ENCODE measurements at regions of chr1 and their contacts with region 1.

Region 1: GRCh38 chr1:161201828-161202725 is at the start of gene NDUFS2:
- DNase-seq: peak; percentile 97
- ATAC-seq: peak; percentile 80
- H3K4me3 Mint-ChIP-seq: peak within 1 kb of the TSS; percentile 91
- H3K27ac Mint-ChIP-seq: peak within 1 kb of the TSS; percentile 96
- H3K4me1 Mint-ChIP-seq: peaks cover 59% of the 10 kb centered on the region
- H3K27me3 Mint-ChIP-seq: no peaks in the 10 kb centered on the region
- CTCF ChIP-seq: no peak
- total RNA-seq, gene NDUFS2: 105 to 108 TPM (median 105 TPM) in 3 replicates

Region 2: DNA sequence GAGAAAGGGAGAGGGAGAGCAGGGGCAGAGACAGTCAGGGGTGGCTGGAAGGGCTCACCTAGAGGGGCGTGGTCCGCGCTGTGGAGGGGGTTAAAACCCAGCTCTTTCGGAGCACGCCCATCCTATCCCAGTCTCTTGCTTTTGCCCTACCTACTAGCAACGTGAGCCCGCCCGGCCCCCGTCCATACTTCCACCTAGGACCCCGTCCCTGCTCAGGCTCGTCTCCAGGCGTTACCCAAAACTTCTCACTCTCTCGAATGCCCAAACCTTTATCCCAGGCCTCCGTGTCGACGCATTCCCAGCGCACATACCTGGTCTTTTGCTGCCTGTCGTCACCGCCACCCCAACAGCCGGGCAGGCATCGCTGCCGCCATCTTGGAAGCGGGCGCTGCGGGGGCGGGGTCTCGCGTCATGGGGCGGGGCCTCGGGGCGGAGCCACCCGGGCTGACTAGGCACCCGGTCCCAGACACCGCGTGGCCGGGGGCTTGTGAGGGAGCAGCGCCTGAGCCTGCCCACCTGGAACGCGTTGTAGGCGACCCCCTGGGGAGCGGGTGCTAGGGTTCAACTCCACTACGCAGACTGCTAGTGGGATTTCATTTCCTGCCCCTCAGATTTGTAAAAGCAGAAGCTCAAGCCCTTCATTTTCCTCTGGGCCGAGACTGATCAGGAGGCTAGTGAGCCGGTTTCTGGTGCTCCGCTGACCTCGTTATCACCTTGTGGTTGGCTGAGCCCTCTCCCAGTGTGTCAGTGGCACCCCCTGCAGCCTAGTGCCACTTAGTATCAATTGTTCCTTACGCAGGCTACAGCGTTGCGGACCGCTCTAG is 24.8 kb before region 1 on chr1 and contains the start of gene B4GALT3:
- CTCF ChIA-PET with region 1: interaction called, 12 read pairs
- POLR2A ChIA-PET with region 1: interaction called, 9 read pairs
- DNase-seq: peak; percentile 97
- ATAC-seq: peak; percentile 88
- H3K4me3 Mint-ChIP-seq: peak within 1 kb of the TSS; percentile 97
- H3K27ac Mint-ChIP-seq: peak within 1 kb of the TSS; percentile 100
- H3K4me1 Mint-ChIP-seq: peaks cover 20% of the 10 kb centered on the region
- H3K27me3 Mint-ChIP-seq: no peaks in the 10 kb centered on the region
- CTCF ChIP-seq: no peak
- total RNA-seq, gene B4GALT3: 40.1 to 44.8 TPM (median 40.7 TPM) in 3 replicates

Measured in WTC11 (cell line).